AG04450 (cell line): ENCODE measurements at regions of chr13 and their contacts with region 1.

Region 1: DNA sequence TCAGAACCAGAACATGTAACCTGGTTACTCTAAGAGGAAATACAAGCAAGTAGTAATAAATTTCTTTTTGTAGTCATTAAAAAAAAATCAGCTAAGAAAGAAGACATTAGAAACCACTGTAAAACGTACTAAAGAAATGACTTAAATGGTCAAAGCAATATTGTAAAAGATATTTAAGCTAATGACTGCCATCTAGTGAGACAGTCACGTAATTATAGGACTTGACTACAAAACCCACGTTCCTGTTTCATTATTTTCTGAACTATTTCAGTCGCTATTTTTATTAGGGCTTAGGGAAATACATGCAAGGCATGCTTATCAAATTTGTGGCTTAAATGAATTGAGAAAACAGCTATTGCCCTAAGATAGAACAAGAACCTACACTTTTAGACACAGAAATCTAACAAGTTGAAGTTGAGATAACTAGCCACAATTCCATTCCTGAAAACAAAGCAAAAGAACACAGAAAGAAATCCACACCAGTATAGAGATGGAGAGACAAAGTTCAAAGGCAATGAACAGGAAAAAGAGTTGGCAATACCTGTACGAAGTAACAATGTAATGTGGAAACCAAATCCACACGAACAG is 17.9 kb downstream of the ALG5 start:
- DNase-seq: peak; percentile 36
- H3K4me3 ChIP-seq: no peak overlapping the region
- H3K27ac ChIP-seq: no peak overlapping the region
- H3K27me3 ChIP-seq: no peaks in the 10 kb centered on the region
- CTCF ChIP-seq: peak; percentile 55

Region 2: GRCh38 chr13:36420437-36420891 is 560.8 kb before region 1 on chr13:
- CTCF ChIA-PET with region 1: interaction called, 27 read pairs
- POLR2A ChIA-PET with region 1: no interaction called
- DNase-seq: peak; percentile 23
- H3K4me3 ChIP-seq: no peak overlapping the region
- H3K27ac ChIP-seq: no peak overlapping the region
- H3K27me3 ChIP-seq: no peaks in the 10 kb centered on the region
- CTCF ChIP-seq: peak; percentile 91

Region 3: GRCh38 chr13:36841391-36841790 is 139.9 kb before region 1 on chr13:
- CTCF ChIA-PET with region 1: interaction called, 432 read pairs
- POLR2A ChIA-PET with region 1: no interaction called
- DNase-seq: no peak
- H3K4me3 ChIP-seq: no peak overlapping the region
- H3K27ac ChIP-seq: no peak overlapping the region
- H3K27me3 ChIP-seq: no peaks in the 10 kb centered on the region
- CTCF ChIP-seq: no peak; the same call in 1 of the 2 replicates

Region 4: DNA sequence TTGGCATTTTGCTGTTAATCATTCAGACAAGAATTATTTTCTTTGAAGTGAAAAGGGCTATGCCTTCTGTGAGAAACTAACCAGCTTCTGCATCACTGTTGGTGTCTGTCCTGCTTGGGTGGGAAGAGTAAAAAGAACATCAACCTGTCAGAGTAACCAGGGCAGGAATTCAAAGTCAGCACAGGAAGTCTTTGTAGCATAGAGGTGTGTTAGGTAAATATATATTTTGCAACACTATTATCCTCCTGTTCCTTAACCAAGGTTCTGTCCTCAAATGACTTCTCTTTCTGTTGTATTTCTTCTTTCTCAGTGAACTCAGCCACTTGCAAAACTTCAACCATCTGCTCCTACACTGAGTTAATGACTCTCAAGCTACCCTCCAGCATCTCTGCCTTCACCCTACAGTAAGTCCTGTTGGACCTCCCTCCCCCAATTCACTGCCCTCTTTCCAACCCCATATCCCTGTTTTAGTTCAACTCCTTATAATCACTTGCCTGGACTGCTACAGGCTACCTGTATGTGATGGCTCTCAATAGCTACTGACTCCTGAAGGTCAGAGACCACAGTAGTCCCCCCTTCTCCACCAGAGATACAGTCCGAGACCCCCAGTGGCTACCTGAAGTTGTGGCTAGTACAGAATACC is 111.1 kb before region 1 on chr13:
- CTCF ChIA-PET with region 1: interaction called, 19 read pairs
- POLR2A ChIA-PET with region 1: no interaction called
- DNase-seq: no peak
- H3K4me3 ChIP-seq: no peak overlapping the region
- H3K27ac ChIP-seq: no peak overlapping the region
- H3K27me3 ChIP-seq: no peaks in the 10 kb centered on the region
- CTCF ChIP-seq: no peak

Region 5: DNA sequence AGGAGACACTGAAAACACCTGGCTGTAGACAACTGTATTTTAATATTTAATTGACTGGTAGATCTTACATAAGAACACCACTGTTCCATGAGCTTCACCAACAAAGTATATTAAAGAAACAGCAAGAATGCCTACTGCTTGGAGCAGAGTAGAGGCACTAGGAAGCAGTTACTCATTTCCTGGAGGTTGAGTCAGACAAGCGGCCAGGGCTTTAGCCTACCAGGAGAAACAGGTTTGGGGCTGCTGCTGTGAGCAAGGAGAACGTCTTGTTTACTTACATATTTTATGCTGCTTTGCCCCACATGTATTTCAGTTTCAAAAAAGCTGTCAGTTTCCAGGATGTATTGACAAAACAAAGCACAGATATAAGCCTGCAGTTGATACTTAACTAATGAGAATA is 15.5 kb before region 1 on chr13:
- CTCF ChIA-PET with region 1: interaction called, 20 read pairs
- POLR2A ChIA-PET with region 1: no interaction called
- DNase-seq: peak; percentile 33
- H3K4me3 ChIP-seq: no peak overlapping the region
- H3K27ac ChIP-seq: no peak overlapping the region
- H3K27me3 ChIP-seq: no peaks in the 10 kb centered on the region
- CTCF ChIP-seq: no peak

Region 6: DNA sequence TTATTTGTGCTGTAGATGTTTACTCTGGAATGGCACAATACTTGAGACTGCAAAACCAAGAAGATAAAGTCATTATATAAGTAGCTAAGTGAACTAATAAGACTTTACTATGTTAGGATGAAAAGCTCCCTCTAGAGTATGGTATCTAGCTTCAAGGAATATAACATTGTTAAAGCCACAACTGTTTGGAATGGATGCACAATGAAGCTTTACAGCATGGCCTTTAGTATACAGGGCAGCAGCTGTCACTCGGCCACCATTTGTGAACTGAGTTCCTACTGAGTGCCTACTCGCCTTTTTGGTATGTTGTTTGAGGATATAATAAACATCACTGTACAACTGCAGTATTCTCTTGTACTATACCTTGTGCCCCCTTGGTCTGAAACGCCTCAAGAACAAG is 11.1 kb after region 1 on chr13:
- CTCF ChIA-PET with region 1: interaction called, 40 read pairs
- POLR2A ChIA-PET with region 1: interaction called, 4 read pairs
- DNase-seq: no peak
- H3K4me3 ChIP-seq: no peak overlapping the region
- H3K27ac ChIP-seq: no peak overlapping the region
- H3K27me3 ChIP-seq: no peaks in the 10 kb centered on the region
- CTCF ChIP-seq: 0 out of 2 replicates have a peak, but pooled peaks have one; percentile 8

Region 7: GRCh38 chr13:36999054-36999714 is 17.9 kb after region 1 on chr13 and contains the start of gene ALG5:
- CTCF ChIA-PET with region 1: interaction called, 11 read pairs
- POLR2A ChIA-PET with region 1: no interaction called
- DNase-seq: peak; percentile 57
- H3K4me3 ChIP-seq: peak within 1 kb of the TSS; percentile 96
- H3K27ac ChIP-seq: peak within 1 kb of the TSS; percentile 99
- H3K27me3 ChIP-seq: no peaks in the 10 kb centered on the region
- CTCF ChIP-seq: peak; percentile 66
- polyA plus RNA-seq, gene ALG5: 36.4 and 51.6 TPM in 2 replicates

Region 8: GRCh38 chr13:37011002-37011401 is 29.8 kb after region 1 on chr13:
- CTCF ChIA-PET with region 1: no interaction called
- POLR2A ChIA-PET with region 1: no interaction called
- DNase-seq: no peak
- H3K4me3 ChIP-seq: no peak overlapping the region
- H3K27ac ChIP-seq: no peak overlapping the region
- H3K27me3 ChIP-seq: no peaks in the 10 kb centered on the region
- CTCF ChIP-seq: no peak